MCF 10A (cell line): ENCODE measurements at regions of chr20 and their contacts with region 1.

Region 1: GRCh38 chr20:32031007-32031958 is 20.8 kb upstream of the HCK start:
- DNase-seq: peak; percentile 82
- H3K4me3 Mint-ChIP-seq: no peak overlapping the region
- H3K27ac Mint-ChIP-seq: no peak overlapping the region
- H3K4me1 Mint-ChIP-seq: peaks cover 4% of the 10 kb centered on the region
- H3K27me3 Mint-ChIP-seq: peaks cover 46% of the 10 kb centered on the region
- CTCF ChIP-seq: peak; percentile 93

Region 2: DNA sequence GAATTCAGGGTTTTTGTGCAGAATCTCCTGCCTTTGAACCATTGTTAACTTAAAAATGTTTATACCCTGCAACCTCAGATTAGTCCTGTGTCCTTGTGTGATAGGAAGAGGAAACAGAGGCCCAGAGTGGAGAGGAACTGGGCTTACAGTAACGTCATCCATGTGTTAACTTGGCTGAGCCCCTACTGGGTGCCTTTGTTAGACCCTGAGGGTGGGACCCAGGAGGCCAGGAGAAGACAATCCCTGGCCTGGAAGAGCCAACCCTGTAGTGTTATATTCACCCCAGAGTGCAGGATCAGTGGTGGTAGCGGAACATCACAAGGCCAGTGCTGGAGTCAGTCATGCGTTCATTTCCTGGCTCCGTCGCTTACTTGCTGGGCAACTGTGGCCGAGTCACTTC is 201.6 kb before region 1 on chr20:
- CTCF ChIA-PET with region 1: interaction called, 158 read pairs
- POLR2A ChIA-PET with region 1: interaction called, 3 read pairs
- intact Hi-C with region 1: no loop called
- DNase-seq: no peak
- H3K4me3 Mint-ChIP-seq: no peak overlapping the region
- H3K27ac Mint-ChIP-seq: no peak overlapping the region
- H3K4me1 Mint-ChIP-seq: no peaks in the 10 kb centered on the region
- H3K27me3 Mint-ChIP-seq: peaks cover 24% of the 10 kb centered on the region
- CTCF ChIP-seq: no peak

Region 3: DNA sequence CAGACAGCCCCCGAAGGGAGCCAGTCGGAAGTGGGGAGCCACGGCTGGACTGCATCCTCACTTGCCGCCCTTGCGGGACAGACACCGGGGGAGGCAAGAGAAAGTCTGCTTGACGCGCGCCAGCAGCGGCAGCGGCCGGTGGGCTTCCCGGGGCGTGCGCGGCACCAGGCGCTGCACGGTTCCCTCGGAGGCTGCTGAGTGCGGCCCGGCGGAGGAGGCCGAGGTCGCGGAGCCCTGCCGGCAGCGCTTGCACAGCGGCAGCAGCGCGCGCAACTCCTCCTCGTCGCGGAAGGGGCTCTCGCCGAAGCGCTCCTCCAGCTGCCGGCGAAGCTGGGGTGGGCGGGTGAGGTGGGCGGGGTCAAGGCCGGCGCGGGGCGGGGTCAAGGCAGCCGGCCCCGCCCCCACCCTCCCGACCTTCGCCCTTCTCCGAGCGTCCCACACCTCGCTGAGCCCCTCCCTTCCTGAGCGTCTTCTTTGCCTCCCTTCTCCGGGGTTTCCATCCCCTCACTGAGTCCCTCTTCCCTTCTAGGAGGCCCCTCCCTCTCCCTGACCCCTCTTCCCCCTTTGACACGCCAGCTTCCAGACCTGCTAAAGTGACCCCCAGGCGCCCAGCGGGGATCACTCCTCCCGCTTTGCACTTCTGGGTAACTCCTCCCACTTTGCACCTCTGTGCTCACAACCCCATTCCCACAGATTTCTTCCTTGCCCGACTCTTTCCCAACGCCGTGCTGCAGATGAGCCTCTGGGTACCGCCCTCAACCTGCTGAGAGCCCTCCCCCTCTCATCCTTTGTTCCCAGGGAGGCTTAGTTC is 169.7 kb before region 1 on chr20:
- CTCF ChIA-PET with region 1: interaction called, 180 read pairs
- POLR2A ChIA-PET with region 1: no interaction called
- intact Hi-C with region 1: no loop called
- DNase-seq: no peak
- H3K4me3 Mint-ChIP-seq: peak overlapping the region; percentile 54
- H3K27ac Mint-ChIP-seq: no peak overlapping the region
- H3K4me1 Mint-ChIP-seq: peaks cover 5% of the 10 kb centered on the region
- H3K27me3 Mint-ChIP-seq: peaks cover 40% of the 10 kb centered on the region
- CTCF ChIP-seq: no peak

Region 4: GRCh38 chr20:31990641-31991338 is 40.5 kb before region 1 on chr20:
- CTCF ChIA-PET with region 1: interaction called, 10 read pairs
- POLR2A ChIA-PET with region 1: no interaction called
- intact Hi-C with region 1: no loop called
- DNase-seq: no peak
- H3K4me3 Mint-ChIP-seq: no peak overlapping the region
- H3K27ac Mint-ChIP-seq: no peak overlapping the region
- H3K4me1 Mint-ChIP-seq: no peaks in the 10 kb centered on the region
- H3K27me3 Mint-ChIP-seq: peaks cover 36% of the 10 kb centered on the region
- CTCF ChIP-seq: no peak

Region 5: GRCh38 chr20:32052090-32052777 is 21.0 kb after region 1 on chr20 and contains the start of gene HCK:
- CTCF ChIA-PET with region 1: interaction called, 15 read pairs
- POLR2A ChIA-PET with region 1: no interaction called
- intact Hi-C with region 1: no loop called
- DNase-seq: no peak
- H3K4me3 Mint-ChIP-seq: no peak within 1 kb of the TSS
- H3K27ac Mint-ChIP-seq: no peak within 1 kb of the TSS
- H3K4me1 Mint-ChIP-seq: no peaks in the 10 kb centered on the region
- H3K27me3 Mint-ChIP-seq: peaks cover 66% of the 10 kb centered on the region
- CTCF ChIP-seq: no peak
- total RNA-seq, gene HCK: not detected in 2 replicates

Region 6: GRCh38 chr20:32207626-32208498 is 176.6 kb after region 1 on chr20 and contains the starts of genes PLAGL2 and POFUT1:
- CTCF ChIA-PET with region 1: no interaction called
- POLR2A ChIA-PET with region 1: no interaction called
- intact Hi-C with region 1: loop called (anchors 5 kb)
- DNase-seq: peak; percentile 86
- H3K4me3 Mint-ChIP-seq: peak within 1 kb of the TSS; percentile 100
- H3K27ac Mint-ChIP-seq: peak within 1 kb of the TSS; percentile 100
- H3K4me1 Mint-ChIP-seq: peaks cover 64% of the 10 kb centered on the region
- H3K27me3 Mint-ChIP-seq: no peaks in the 10 kb centered on the region
- CTCF ChIP-seq: no peak
- total RNA-seq, gene PLAGL2: 18.4 and 18.6 TPM in 2 replicates
- total RNA-seq, gene POFUT1: 43.1 and 43.9 TPM in 2 replicates